ENCODE measurements at regions of chrX and their contacts with region 1.

Region 1: GRCh38 chrX:136588041-136588788 is 56.2 kb downstream of the VGLL1 start:
- DNase-seq: no peak
- H3K4me3 Mint-ChIP-seq: peak overlapping the region; percentile 4
- H3K27ac Mint-ChIP-seq: peak overlapping the region; percentile 89
- H3K4me1 Mint-ChIP-seq: peaks cover 59% of the 10 kb centered on the region
- H3K27me3 Mint-ChIP-seq: no peaks in the 10 kb centered on the region

Region 2: DNA sequence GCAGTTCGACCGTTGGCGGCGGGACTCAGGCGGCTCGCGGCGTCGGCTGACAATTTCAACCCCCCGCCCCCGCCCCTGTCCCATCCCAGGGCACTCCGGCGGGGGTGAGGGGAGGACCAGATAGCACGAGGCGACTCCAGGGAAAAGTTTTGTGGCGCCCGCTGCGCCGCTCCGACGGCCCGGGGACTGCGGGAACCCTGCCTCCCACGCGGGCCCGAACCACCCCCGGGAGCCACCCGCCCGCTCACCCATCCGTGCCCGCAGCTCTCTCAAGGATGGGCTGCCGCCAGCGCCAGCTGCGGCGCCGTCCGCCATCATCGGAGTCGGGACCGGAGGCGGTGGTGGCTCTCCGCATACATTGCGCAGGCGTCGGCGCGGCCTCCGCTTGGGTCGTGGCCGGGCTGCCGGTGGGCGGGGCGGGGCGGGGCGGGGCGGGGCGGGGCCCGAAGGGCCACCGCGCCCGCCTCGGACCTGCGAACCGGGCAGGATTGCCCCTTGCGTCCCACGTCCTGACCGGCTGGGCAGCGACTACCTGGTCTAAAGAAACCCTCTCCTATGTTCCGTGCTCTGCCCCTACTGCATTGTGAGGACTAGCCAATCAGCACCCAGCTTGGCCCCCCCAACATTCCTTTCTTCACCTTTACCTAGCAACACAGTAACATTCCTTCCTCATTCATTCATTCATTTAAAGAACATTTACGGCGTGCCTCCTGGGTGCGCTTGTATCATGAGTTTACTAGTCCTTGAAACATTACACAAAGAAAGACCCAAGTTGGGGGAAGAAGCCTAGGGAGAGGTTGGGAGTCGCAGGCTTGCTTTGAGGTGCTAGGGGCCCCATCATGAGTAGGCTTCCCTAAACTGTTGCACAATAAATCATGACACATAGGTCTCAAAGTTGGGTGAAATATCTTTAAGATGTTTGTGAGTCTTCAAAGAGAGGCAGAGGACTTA is 336.9 kb before region 1 on chrX and contains the start of gene MAP7D3:
- intact Hi-C with region 1: loop called (anchors 2 kb)
- DNase-seq: peak; percentile 61
- H3K4me3 Mint-ChIP-seq: peak within 1 kb of the TSS; percentile 87
- H3K27ac Mint-ChIP-seq: peak within 1 kb of the TSS; percentile 94
- H3K4me1 Mint-ChIP-seq: peaks cover 16% of the 10 kb centered on the region
- H3K27me3 Mint-ChIP-seq: no peaks in the 10 kb centered on the region
- total RNA-seq, gene MAP7D3: 27.3 and 29.1 TPM in 2 replicates

Region 3: DNA sequence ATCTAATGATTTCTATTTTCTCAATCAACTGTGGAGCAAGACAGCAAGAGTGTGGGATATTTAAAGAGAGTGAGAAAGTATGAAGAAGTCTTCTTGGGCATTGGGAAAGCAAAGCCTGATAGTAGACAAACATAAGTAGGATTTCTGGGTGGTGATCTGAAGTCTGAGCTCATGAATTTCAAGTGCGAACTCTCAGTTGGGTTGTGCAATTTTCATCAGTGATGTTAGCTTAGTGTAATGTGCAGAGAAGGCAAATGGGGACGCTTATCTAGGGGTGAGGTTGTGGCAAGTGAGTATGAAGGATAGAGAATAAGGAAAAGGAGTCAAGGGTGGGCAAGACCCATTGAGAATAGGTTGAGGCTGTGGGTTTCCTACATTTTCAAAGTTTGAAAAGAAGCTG is 32.5 kb before region 1 on chrX:
- intact Hi-C with region 1: no loop called
- DNase-seq: no peak
- H3K4me3 Mint-ChIP-seq: no peak overlapping the region
- H3K27ac Mint-ChIP-seq: no peak overlapping the region
- H3K4me1 Mint-ChIP-seq: no peaks in the 10 kb centered on the region
- H3K27me3 Mint-ChIP-seq: peaks cover 10% of the 10 kb centered on the region

Region 4: DNA sequence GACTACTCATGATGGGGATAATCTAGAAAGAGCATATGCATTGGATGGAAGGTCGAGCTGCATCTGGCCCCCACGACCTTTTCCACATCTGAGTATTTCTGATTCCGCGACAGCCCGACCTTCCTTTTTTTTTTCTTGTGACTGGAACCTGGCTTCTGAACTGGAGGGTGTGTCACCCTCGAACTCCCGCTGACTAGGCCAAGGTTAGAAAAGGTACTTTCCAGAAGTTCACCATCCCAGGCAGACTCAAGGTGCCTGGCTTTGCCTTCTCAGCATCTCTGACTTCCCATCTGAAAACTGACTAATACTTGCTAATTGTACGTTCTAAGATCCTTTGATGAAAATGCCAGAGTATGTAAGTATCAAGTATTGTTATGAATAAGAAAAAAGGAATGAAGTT is 10.4 kb after region 1 on chrX:
- intact Hi-C with region 1: loop called (anchors 1 kb)
- DNase-seq: no peak
- H3K4me3 Mint-ChIP-seq: peak overlapping the region; percentile 45
- H3K27ac Mint-ChIP-seq: peak overlapping the region; percentile 88
- H3K4me1 Mint-ChIP-seq: peaks cover 52% of the 10 kb centered on the region
- H3K27me3 Mint-ChIP-seq: no peaks in the 10 kb centered on the region

Region 5: DNA sequence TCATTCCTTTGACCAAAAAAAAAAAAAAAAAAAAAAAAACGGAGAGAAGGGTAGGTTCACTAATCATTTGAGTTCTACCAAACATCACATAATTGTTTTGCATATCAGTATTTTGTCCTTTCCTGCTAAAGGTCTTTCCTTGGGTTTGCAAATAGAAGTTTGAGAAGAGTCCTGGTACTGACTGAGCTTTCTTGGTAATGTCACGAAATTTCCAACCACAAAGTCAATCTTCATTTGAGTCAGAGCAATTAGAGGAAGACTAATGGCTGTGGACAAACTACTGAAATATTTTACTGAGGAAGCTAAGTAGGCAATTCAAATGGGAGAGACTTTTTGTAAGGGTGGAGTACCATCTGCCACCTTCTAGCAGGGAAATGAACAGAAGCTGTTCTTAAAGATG is 38.0 kb after region 1 on chrX:
- intact Hi-C with region 1: loop called (anchors 2 kb)
- DNase-seq: no peak
- H3K4me3 Mint-ChIP-seq: peak overlapping the region; percentile 30
- H3K27ac Mint-ChIP-seq: peak overlapping the region; percentile 85
- H3K4me1 Mint-ChIP-seq: peaks cover 94% of the 10 kb centered on the region
- H3K27me3 Mint-ChIP-seq: no peaks in the 10 kb centered on the region

Region 6: GRCh38 chrX:136652822-136653723 is 64.9 kb after region 1 on chrX:
- intact Hi-C with region 1: loop called (anchors 2 kb)
- DNase-seq: no peak
- H3K4me3 Mint-ChIP-seq: peak overlapping the region; percentile 99
- H3K27ac Mint-ChIP-seq: peak overlapping the region; percentile 94
- H3K4me1 Mint-ChIP-seq: peaks cover 64% of the 10 kb centered on the region
- H3K27me3 Mint-ChIP-seq: no peaks in the 10 kb centered on the region

Measured in activated T-helper 1 cell treated with anti-CD3 and anti-CD28 coated beads, Interleukin-12 subunit alpha, Interleukin-12 subunit beta, Interleukin-2, Interleukin-4 antibody, amounts not matched to agents 30 ng/mL and 10 ng/mL and 1 ng/mL, durations not matched to agents 14 hours and 24 hours and 36 hours (primary cell).